ENCODE measurements at regions of chr9 and their contacts with region 1.

Region 1: GRCh38 chr9:107172160-107172978 is 110.7 kb upstream of the RAD23B start:
- DNase-seq: peak; percentile 56 to 71
- H3K4me3 ChIP-seq: no peak overlapping the region
- H3K27ac ChIP-seq: no peak overlapping the region
- H3K4me1 ChIP-seq: no peaks in the 10 kb centered on the region
- H3K27me3 ChIP-seq: no peaks in the 10 kb centered on the region
- CTCF ChIP-seq: peak; percentile 95

Region 2: GRCh38 chr9:105608721-105609598 is 1563.4 kb before region 1 on chr9:
- CTCF ChIA-PET with region 1: no interaction called
- POLR2A ChIA-PET with region 1: no interaction called
- intact Hi-C with region 1: loop called (anchors 2 kb)
- DNase-seq: peak in 1 of 2 experiments; percentile 55
- H3K4me3 ChIP-seq: no peak overlapping the region
- H3K27ac ChIP-seq: no peak overlapping the region
- H3K4me1 ChIP-seq: no peaks in the 10 kb centered on the region
- H3K27me3 ChIP-seq: no peaks in the 10 kb centered on the region
- CTCF ChIP-seq: peak; percentile 78

Region 3: DNA sequence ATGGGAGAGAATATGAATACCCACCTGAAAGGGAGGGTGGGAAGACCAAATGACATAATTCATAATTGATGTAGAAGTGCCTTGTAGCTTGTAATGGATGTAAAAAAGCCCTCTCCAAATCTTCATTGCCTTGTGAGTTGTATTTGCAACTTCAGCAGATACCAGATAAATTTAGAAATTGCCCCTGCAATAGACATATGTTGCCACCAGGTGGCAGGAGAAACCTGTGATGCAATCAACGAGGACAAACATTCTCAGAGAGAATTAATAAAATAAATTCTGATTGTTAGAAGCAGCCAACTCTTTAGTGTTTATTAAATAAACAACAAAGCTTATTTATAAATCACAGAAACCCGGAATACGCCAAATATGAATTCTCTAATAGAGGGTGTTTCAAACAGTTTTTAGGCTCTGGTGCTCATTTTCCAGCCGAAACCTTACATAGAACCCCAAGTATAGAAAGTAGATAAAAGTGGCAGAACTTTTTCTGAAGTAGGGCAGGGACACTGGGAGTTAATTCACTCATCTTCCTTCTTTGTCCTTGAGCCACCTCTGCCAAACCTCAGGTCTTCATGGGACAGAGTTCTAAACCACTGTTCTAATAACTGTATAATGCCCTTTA is 1330.2 kb before region 1 on chr9:
- CTCF ChIA-PET with region 1: no interaction called
- POLR2A ChIA-PET with region 1: no interaction called
- intact Hi-C with region 1: loop called (anchors 1 kb)
- DNase-seq: peak; percentile 29 to 36
- H3K4me3 ChIP-seq: no peak overlapping the region
- H3K27ac ChIP-seq: no peak overlapping the region
- H3K4me1 ChIP-seq: no peaks in the 10 kb centered on the region
- H3K27me3 ChIP-seq: no peaks in the 10 kb centered on the region
- CTCF ChIP-seq: peak; percentile 97

Region 4: GRCh38 chr9:105901514-105902109 is 1270.8 kb before region 1 on chr9:
- CTCF ChIA-PET with region 1: no interaction called
- POLR2A ChIA-PET with region 1: no interaction called
- intact Hi-C with region 1: loop called (anchors 1 kb)
- DNase-seq: peak; percentile 57 to 73
- H3K4me3 ChIP-seq: no peak overlapping the region
- H3K27ac ChIP-seq: no peak overlapping the region
- H3K4me1 ChIP-seq: peaks cover 12% of the 10 kb centered on the region
- H3K27me3 ChIP-seq: no peaks in the 10 kb centered on the region
- CTCF ChIP-seq: peak; percentile 90

Region 5: GRCh38 chr9:107218829-107219485 is 46.6 kb after region 1 on chr9:
- CTCF ChIA-PET with region 1: no interaction called
- POLR2A ChIA-PET with region 1: no interaction called
- intact Hi-C with region 1: no loop called
- DNase-seq: no peak
- H3K4me3 ChIP-seq: no peak overlapping the region
- H3K27ac ChIP-seq: no peak overlapping the region
- H3K4me1 ChIP-seq: peaks cover 1% of the 10 kb centered on the region
- H3K27me3 ChIP-seq: no peaks in the 10 kb centered on the region
- CTCF ChIP-seq: no peak

Region 6: DNA sequence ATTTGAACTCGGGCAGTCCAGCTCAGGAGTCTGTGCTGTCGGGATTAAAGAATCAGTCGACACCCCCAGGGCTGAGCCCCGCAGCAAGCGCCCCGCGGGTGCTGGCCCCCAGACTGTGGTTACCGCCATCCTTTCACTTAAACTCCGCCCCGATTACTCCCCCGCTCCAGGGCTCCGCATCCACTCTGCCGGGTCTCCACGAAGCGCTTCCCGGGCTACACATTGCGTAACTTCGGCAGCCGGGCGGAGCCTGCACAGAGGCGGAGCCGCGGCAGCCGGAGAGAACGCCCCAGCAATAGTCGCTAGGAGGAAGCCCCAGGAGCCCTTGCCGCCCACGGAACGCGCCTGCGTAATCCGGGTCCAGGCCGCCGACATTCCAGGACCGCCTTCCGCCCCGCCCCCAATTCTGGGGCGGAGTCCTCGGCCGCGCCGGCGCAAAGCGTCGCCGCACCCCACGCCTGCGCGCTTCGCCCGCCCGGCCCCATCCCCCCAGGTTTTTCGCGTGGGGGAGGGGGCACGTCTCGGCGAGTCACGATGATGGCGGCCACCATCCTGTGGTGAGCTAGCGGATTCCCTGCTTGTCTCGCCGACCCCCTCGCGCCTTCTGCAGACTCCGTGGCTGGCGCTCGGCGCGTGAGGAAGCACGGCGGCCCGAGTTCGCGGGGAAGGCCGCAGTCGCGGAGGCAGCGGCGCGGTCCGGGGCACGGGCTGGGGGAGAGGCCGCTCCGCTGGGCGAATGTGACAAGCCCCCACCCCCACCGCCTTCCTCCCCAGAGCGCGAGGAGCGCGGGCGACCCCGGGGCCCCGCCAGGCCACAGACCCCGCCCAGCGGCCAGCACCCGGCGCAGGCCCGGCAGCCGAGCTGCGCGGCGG is 110.6 kb after region 1 on chr9 and contains the start of gene RAD23B:
- CTCF ChIA-PET with region 1: no interaction called
- POLR2A ChIA-PET with region 1: no interaction called
- intact Hi-C with region 1: loop called (anchors 5 kb)
- DNase-seq: peak; percentile 94 to 99
- H3K4me3 ChIP-seq: peak within 1 kb of the TSS; percentile 77
- H3K27ac ChIP-seq: peak within 1 kb of the TSS; percentile 88
- H3K4me1 ChIP-seq: peaks cover 58% of the 10 kb centered on the region
- H3K27me3 ChIP-seq: no peaks in the 10 kb centered on the region
- CTCF ChIP-seq: no peak
- total RNA-seq, gene RAD23B: 164 and 176 TPM in 2 replicates

Region 7: DNA sequence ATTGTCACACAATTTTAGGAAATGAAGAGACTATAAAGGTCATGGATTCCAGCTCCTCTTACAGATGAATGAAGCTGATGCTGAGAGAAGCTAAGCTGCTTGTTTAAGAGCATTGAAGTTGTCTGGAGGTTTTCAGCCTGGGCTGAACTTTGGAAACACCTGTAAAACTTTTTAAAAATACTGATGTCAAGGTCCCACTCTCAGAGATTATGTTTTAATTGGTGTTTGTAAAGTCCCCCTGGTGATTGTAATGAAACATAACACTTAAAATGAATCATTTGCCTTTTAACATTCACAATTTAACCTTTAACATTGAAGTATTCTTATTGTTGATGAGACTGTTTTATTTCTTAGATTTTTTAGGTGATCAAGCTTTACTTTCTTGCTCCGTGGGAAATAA is 127.1 kb after region 1 on chr9:
- CTCF ChIA-PET with region 1: no interaction called
- POLR2A ChIA-PET with region 1: no interaction called
- intact Hi-C with region 1: loop called (anchors 5 kb)
- DNase-seq: no peak
- H3K4me3 ChIP-seq: no peak overlapping the region
- H3K27ac ChIP-seq: peak overlapping the region; percentile 11
- H3K4me1 ChIP-seq: peaks cover 19% of the 10 kb centered on the region; the same call in 1 of the 2 replicates
- H3K27me3 ChIP-seq: no peaks in the 10 kb centered on the region
- CTCF ChIP-seq: peak; percentile 50; the same call in 1 of the 2 replicates

Region 8: DNA sequence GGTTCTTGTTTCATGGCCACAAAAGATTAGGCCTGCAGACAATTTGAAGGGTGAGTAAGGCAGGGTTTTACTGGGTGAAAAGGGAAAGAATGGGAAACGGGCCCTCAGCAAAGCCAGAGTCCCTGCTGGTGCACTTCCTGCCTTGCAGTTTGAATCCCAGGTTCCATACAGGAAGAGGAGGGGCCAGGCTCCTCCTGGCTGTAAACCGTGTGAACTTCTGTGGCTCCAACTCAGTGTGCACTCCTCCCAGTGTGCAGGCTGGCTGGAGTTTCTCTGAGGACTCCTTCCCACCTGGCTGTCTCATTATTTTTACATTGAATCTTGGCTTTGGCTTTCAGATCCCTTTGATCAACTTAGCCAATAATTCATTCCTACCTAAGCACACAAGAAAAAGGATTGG is 684.3 kb after region 1 on chr9:
- CTCF ChIA-PET with region 1: no interaction called
- POLR2A ChIA-PET with region 1: no interaction called
- intact Hi-C with region 1: no loop called
- DNase-seq: no peak
- H3K4me3 ChIP-seq: no peak overlapping the region
- H3K27ac ChIP-seq: no peak overlapping the region
- H3K4me1 ChIP-seq: no peaks in the 10 kb centered on the region
- H3K27me3 ChIP-seq: no peaks in the 10 kb centered on the region
- CTCF ChIP-seq: no peak

Measured in PC-9 (cell line).